ENCODE measurements at regions of chr1 and their contacts with region 1.

Region 1: GRCh38 chr1:186680245-186681061 is at the start of gene PTGS2:
- DNase-seq: peak; percentile 84 to 97
- ATAC-seq: peak; percentile 98 to 99
- H3K4me3 ChIP-seq: peak within 1 kb of the TSS; percentile 72
- H3K27ac ChIP-seq: peak within 1 kb of the TSS; percentile 93
- H3K4me1 ChIP-seq: peaks cover 35% of the 10 kb centered on the region
- CTCF ChIP-seq: peak; percentile 48
- EP300 ChIP-seq: peak; percentile 55 to 75; a peak in 3 of 5 replicates
- POLR2A ChIP-seq: peak; percentile 90
- RAD21 ChIP-seq: peak; percentile 35 to 58; a peak in 4 of 5 replicates
- polyA plus RNA-seq, gene PTGS2: 127 and 140 TPM in 2 replicates

Region 2: GRCh38 chr1:186304982-186305949 is 375.2 kb before region 1 on chr1:
- CTCF ChIA-PET with region 1: no interaction called
- POLR2A ChIA-PET with region 1: no interaction called
- DNase-seq: peak; percentile 53 to 58
- ATAC-seq: peak; percentile 70 to 88; a peak in 5 of 6 replicates
- H3K4me3 ChIP-seq: no peak overlapping the region
- H3K27ac ChIP-seq: no peak overlapping the region
- H3K4me1 ChIP-seq: peaks cover under 1% of the 10 kb centered on the region; the same call in 1 of the 3 replicates
- CTCF ChIP-seq: peak; percentile 65
- EP300 ChIP-seq: no peak
- POLR2A ChIP-seq: no peak
- RAD21 ChIP-seq: peak; percentile 29 to 34; a peak in 1 of 5 replicates

Region 3: DNA sequence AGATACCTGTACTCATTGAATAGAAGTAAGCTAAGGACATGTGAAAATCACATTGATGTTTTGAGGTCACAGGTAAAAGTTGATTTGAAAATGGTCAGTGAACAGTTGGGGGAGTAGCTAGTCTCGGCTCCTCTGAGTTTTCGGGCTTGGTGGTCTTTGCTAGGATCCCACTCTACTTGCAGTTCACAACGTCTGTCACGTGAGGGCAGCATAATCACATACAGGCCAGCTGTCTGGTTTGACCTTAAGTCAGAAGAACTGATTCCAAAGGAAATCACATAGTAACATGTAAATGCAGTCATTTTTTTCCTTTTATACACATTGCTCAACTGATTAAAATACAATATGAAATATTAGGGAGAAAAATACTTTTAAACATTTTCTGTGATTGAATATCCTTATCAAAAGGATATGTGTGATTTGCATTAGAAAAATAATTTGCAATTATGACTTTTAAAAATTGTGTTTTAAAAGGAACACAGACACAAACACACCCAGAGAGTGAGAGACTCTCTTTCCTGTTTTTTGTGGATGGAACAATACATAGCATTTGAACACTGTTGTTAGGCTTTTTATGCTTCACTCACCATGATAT is 197.7 kb before region 1 on chr1:
- CTCF ChIA-PET with region 1: interaction called, 15 read pairs
- POLR2A ChIA-PET with region 1: no interaction called
- DNase-seq: peak; percentile 41 to 77
- ATAC-seq: peak; percentile 83 to 90
- H3K4me3 ChIP-seq: no peak overlapping the region
- H3K27ac ChIP-seq: peak overlapping the region; percentile 17 to 38; a peak in 5 of 6 replicates
- H3K4me1 ChIP-seq: peaks cover 23% of the 10 kb centered on the region; the same call in 2 of the 3 replicates
- CTCF ChIP-seq: peak; percentile 98
- EP300 ChIP-seq: no peak
- POLR2A ChIP-seq: no peak
- RAD21 ChIP-seq: peak; percentile 99 to 100

Region 4: DNA sequence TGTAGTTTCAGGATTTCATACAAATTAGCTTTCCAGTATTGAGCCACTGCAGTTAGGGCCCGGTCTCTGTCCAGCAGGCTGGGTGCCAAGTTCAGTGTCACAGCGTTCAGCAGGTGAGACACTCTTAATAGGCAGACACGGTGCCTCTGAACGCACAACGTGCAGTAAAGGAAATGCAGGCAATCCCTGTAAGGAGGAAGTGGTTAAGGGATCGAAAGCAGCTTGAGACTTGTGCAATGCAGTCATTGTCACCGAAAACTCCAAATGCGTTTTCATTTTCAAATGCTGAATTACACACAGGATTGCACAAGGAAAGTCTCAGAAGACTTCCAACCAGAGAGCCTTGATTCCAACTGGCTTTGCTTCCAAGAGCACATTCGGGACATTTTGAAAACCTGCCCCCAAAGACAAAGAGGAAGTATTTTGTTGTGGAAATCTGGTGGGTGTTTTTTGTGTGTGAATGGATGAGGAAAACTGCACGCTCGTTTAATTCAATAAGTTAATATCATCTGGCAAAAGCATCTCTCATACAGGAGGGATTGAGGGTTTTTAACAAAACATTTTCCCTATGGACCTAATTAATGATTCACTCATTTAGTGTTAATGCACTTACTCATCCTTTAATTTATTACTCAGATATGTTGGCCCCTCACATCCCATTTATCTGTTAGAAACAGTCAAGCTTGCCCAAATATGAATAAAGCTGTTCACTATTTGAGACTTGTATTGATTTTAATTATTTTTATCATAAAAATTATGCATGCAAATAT is 61.9 kb before region 1 on chr1:
- CTCF ChIA-PET with region 1: interaction called, 13 read pairs
- POLR2A ChIA-PET with region 1: interaction called, 6 read pairs
- DNase-seq: peak; percentile 53 to 67
- ATAC-seq: peak; percentile 73 to 74; a peak in 5 of 6 replicates
- H3K4me3 ChIP-seq: peak overlapping the region; percentile 44
- H3K27ac ChIP-seq: peak overlapping the region; percentile 79
- H3K4me1 ChIP-seq: peaks cover 7% of the 10 kb centered on the region
- CTCF ChIP-seq: no peak
- EP300 ChIP-seq: no peak
- POLR2A ChIP-seq: no peak
- RAD21 ChIP-seq: no peak

Region 5: GRCh38 chr1:186763107-186763506 is 82.7 kb after region 1 on chr1:
- CTCF ChIA-PET with region 1: no interaction called
- POLR2A ChIA-PET with region 1: no interaction called
- DNase-seq: peak; percentile 4 to 86
- ATAC-seq: peak; percentile 78 to 89
- H3K4me3 ChIP-seq: no peak overlapping the region
- H3K27ac ChIP-seq: peak overlapping the region; percentile 49 to 72; a peak in 5 of 6 replicates
- H3K4me1 ChIP-seq: peaks cover 20% of the 10 kb centered on the region
- CTCF ChIP-seq: no peak
- EP300 ChIP-seq: no peak
- POLR2A ChIP-seq: no peak
- RAD21 ChIP-seq: no peak

Measured in A549 (cell line).